Mammary epithelial cell (primary cell): ENCODE measurements at regions of chr13 and their contacts with region 1.

Region 1: GRCh38 chr13:30354493-30355383 is 47.4 kb upstream of the KATNAL1 start:
- DNase-seq: no peak
- H3K4me3 ChIP-seq: no peak overlapping the region
- H3K27ac ChIP-seq: no peak overlapping the region
- H3K4me1 ChIP-seq: no peaks in the 10 kb centered on the region
- H3K27me3 ChIP-seq: no peaks in the 10 kb centered on the region
- CTCF ChIP-seq: no peak

Region 2: DNA sequence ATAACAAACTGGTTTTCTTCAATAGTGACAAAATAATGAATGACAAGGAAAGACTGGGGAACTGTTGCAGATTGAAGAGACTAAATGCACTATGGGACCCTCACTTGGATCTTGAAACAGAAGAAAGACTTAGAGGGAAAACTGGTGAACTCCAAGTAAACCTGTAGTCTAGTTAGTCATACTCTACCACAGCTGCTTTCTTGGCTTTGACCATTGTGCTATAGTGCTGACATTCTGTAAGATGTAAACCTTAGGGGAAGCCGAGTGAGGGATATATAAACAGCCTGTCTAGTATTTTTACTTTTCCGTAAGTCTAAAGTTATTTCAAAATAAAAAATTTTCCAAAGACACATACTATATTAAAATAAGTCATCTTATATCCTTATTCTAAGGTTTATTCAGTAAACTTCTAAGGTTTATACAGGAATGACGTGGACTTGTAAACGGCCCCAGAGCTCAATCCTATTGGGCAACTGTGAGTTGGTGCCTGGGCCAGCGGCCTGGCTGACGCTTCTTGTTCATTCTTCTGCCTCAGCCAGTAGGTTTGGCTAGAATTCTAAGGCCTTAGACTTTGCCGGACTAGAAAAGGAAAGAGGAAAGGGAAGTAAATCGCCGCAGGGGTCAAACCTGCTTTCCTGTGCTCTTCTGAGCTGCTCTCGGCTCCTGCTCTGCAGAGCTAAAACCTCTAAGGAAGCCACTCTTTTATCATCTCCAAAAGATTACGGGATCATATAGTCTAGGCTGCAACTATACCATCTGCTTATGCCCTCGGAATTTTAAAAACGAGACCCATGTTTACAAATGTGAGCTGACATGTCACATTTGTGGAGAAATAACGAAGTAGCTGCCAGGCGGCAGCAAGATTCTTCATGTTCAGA is 33.9 kb after region 1 on chr13:
- CTCF ChIA-PET with region 1: no interaction called
- dilution Hi-C with region 1: loop called (anchors 5 kb)
- in situ Hi-C with region 1: no loop called
- intact Hi-C with region 1: no loop called
- DNase-seq: peak; percentile 42
- H3K4me3 ChIP-seq: no peak overlapping the region
- H3K27ac ChIP-seq: no peak overlapping the region
- H3K4me1 ChIP-seq: peaks cover 17% of the 10 kb centered on the region
- H3K27me3 ChIP-seq: no peaks in the 10 kb centered on the region
- CTCF ChIP-seq: no peak

Region 3: GRCh38 chr13:30504081-30504480 is 149.3 kb after region 1 on chr13:
- CTCF ChIA-PET with region 1: no interaction called
- dilution Hi-C with region 1: no loop called
- in situ Hi-C with region 1: no loop called
- intact Hi-C with region 1: no loop called
- DNase-seq: no peak
- H3K4me3 ChIP-seq: no peak overlapping the region
- H3K27ac ChIP-seq: no peak overlapping the region
- H3K4me1 ChIP-seq: no peaks in the 10 kb centered on the region
- H3K27me3 ChIP-seq: no peaks in the 10 kb centered on the region
- CTCF ChIP-seq: no peak